CD8-positive, alpha-beta T cell (primary cell): ENCODE measurements at regions of chr12 and their contacts with region 1.

Region 1: GRCh38 chr12:38601949-38602348 is 285.4 kb downstream of the ALG10B start:
- DNase-seq: no peak
- ATAC-seq: no peak
- H3K4me3 ChIP-seq: no peak overlapping the region
- H3K4me3 Mint-ChIP-seq: no peak overlapping the region
- H3K27ac ChIP-seq: no peak overlapping the region
- H3K27ac Mint-ChIP-seq: no peak overlapping the region
- H3K4me1 ChIP-seq: no peaks in the 10 kb centered on the region
- H3K4me1 Mint-ChIP-seq: no peaks in the 10 kb centered on the region
- H3K27me3 ChIP-seq: no peaks in the 10 kb centered on the region
- H3K27me3 Mint-ChIP-seq: no peaks in the 10 kb centered on the region
- CTCF ChIP-seq: no peak

Region 2: GRCh38 chr12:38571417-38571816 is 30.5 kb before region 1 on chr12:
- CTCF ChIA-PET with region 1: no interaction called
- POLR2A ChIA-PET with region 1: no interaction called
- intact Hi-C with region 1: no loop called
- DNase-seq: no peak
- ATAC-seq: no peak
- H3K4me3 ChIP-seq: no peak overlapping the region
- H3K4me3 Mint-ChIP-seq: no peak overlapping the region
- H3K27ac ChIP-seq: no peak overlapping the region
- H3K27ac Mint-ChIP-seq: no peak overlapping the region
- H3K4me1 ChIP-seq: no peaks in the 10 kb centered on the region
- H3K4me1 Mint-ChIP-seq: no peaks in the 10 kb centered on the region
- H3K27me3 ChIP-seq: no peaks in the 10 kb centered on the region
- H3K27me3 Mint-ChIP-seq: no peaks in the 10 kb centered on the region
- CTCF ChIP-seq: no peak

Region 3: DNA sequence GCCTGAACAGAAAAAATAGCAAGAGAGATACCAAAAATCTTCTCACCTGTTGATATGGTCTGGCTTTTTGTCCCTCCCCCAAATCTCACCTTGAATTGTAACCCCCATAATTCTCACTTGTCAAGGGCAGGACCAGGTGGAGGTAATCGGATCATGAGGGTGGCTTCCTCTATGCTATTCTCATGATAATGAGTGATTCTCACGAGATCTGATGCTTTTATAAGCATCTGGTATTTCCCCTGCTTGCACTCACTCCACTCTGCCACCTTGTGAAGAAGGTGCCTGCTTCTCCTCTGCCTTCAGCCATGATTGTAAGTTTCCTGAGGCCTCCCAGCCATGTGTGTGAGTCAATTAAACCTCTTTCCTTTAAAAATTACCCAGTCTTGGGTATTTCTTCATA is 12.2 kb after region 1 on chr12:
- CTCF ChIA-PET with region 1: no interaction called
- POLR2A ChIA-PET with region 1: no interaction called
- intact Hi-C with region 1: no loop called
- DNase-seq: no peak
- ATAC-seq: no peak
- H3K4me3 ChIP-seq: no peak overlapping the region
- H3K4me3 Mint-ChIP-seq: no peak overlapping the region
- H3K27ac ChIP-seq: no peak overlapping the region
- H3K27ac Mint-ChIP-seq: no peak overlapping the region
- H3K4me1 ChIP-seq: no peaks in the 10 kb centered on the region
- H3K4me1 Mint-ChIP-seq: no peaks in the 10 kb centered on the region
- H3K27me3 ChIP-seq: no peaks in the 10 kb centered on the region
- H3K27me3 Mint-ChIP-seq: no peaks in the 10 kb centered on the region
- CTCF ChIP-seq: no peak

Region 4: GRCh38 chr12:38646146-38646545 is 44.2 kb after region 1 on chr12:
- CTCF ChIA-PET with region 1: no interaction called
- POLR2A ChIA-PET with region 1: no interaction called
- intact Hi-C with region 1: loop called in 1 of 2 experiments (anchors 1 kb)
- DNase-seq: no peak
- ATAC-seq: no peak
- H3K4me3 ChIP-seq: no peak overlapping the region
- H3K4me3 Mint-ChIP-seq: no peak overlapping the region
- H3K27ac ChIP-seq: no peak overlapping the region
- H3K27ac Mint-ChIP-seq: no peak overlapping the region
- H3K4me1 ChIP-seq: no peaks in the 10 kb centered on the region
- H3K4me1 Mint-ChIP-seq: no peaks in the 10 kb centered on the region
- H3K27me3 ChIP-seq: no peaks in the 10 kb centered on the region
- H3K27me3 Mint-ChIP-seq: no peaks in the 10 kb centered on the region
- CTCF ChIP-seq: no peak

Region 5: DNA sequence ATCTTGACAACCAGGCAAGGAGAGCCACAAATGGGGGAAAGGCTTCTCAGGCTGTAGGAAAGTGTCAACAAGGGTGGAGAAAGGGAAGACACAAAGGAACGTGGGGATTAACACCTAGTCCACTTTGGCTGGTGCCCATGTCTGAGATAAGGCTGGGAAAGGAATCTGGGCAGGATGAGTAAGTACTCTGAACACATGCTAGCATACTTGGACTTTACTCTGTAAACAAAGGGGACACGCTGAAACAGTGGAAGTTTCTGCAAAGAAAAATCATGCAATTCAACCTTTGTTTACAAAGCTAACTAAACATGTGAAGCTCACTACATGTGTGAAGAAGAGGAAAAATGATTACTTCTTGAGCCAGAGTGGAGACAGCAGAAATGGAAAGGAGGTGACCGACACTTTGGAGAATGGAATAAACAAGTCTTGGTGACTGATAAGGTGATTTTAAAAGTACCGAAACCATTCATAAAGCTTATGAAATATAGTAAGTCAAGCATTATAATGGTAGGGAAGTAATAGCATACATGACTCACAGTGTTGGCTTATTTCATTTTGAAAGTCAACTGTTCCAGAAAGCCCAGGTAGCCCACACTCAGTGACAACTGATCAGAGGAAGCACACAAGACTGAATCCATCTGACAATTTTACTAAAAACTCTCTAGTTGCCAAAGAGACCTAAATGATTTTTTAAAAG is 290.3 kb after region 1 on chr12:
- CTCF ChIA-PET with region 1: no interaction called
- POLR2A ChIA-PET with region 1: no interaction called
- intact Hi-C with region 1: no loop called
- DNase-seq: no peak
- ATAC-seq: no peak
- H3K4me3 ChIP-seq: no peak overlapping the region
- H3K4me3 Mint-ChIP-seq: no peak overlapping the region
- H3K27ac ChIP-seq: no peak overlapping the region
- H3K27ac Mint-ChIP-seq: no peak overlapping the region
- H3K4me1 ChIP-seq: no peaks in the 10 kb centered on the region
- H3K4me1 Mint-ChIP-seq: no peaks in the 10 kb centered on the region
- H3K27me3 ChIP-seq: peaks cover 0 to 2% of the 10 kb centered on the region in 2 experiments
- H3K27me3 Mint-ChIP-seq: no peaks in the 10 kb centered on the region
- CTCF ChIP-seq: no peak